CD8-positive, alpha-beta memory T cell (primary cell): ENCODE measurements at regions of chr1 and their contacts with region 1.

Region 1: GRCh38 chr1:147492200-147492599 is 49.1 kb upstream of the BCL9 start:
- DNase-seq: no peak
- H3K4me3 ChIP-seq: no peak overlapping the region
- H3K4me3 Mint-ChIP-seq: no peak overlapping the region
- H3K27ac ChIP-seq: no peak overlapping the region
- H3K27ac Mint-ChIP-seq: no peak overlapping the region
- H3K4me1 ChIP-seq: peaks cover 4% of the 10 kb centered on the region
- H3K4me1 Mint-ChIP-seq: peaks cover 0 to 3% (median 0%) of the 10 kb centered on the region in 3 donors
- H3K27me3 ChIP-seq: no peaks in the 10 kb centered on the region
- H3K27me3 Mint-ChIP-seq: peaks cover 5% of the 10 kb centered on the region in 2 donors

Region 2: GRCh38 chr1:147417028-147417427 is 75.2 kb before region 1 on chr1:
- CTCF ChIA-PET with region 1: no interaction called
- POLR2A ChIA-PET with region 1: no interaction called
- DNase-seq: no peak
- H3K4me3 ChIP-seq: no peak overlapping the region
- H3K4me3 Mint-ChIP-seq: no peak overlapping the region
- H3K27ac ChIP-seq: no peak overlapping the region
- H3K27ac Mint-ChIP-seq: no peak overlapping the region
- H3K4me1 ChIP-seq: no peaks in the 10 kb centered on the region
- H3K4me1 Mint-ChIP-seq: no peaks in the 10 kb centered on the region
- H3K27me3 ChIP-seq: no peaks in the 10 kb centered on the region
- H3K27me3 Mint-ChIP-seq: peaks cover 20 to 68% of the 10 kb centered on the region in 2 donors

Region 3: DNA sequence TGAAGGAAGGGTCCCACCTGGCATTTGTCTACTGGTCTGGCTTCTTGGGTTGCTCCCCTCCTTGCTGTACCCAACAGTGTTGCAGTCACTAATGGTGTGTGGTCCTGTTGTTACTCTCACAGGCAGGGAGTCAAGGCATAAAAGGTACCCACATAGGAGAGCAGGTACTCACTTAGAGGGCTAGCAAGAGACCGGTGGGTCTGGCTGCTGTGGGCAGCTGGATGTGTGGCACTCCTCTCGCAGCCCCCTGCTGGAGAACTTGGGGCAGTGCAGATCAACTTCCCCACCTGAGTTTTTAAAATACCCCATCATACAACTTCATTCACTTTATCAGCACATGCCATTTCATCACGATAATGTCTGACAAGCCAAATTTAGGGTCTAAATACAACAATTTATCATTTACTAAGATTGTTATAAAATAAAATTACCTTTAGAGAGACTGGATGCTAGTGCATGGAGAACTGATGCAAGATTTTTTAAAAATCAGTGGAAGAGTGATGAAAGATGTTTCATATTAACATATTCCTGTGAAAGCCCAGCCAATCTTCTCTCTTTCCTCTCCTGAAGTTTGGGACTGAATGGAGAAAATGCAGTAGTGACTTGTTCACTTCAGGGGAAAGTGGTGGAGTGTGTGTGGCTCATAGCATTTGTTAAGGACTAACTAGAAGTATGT is 135.4 kb after region 1 on chr1:
- CTCF ChIA-PET with region 1: interaction called, 19 read pairs
- POLR2A ChIA-PET with region 1: no interaction called
- DNase-seq: peak; percentile 35 to 69 (median 40)
- H3K4me3 ChIP-seq: no peak overlapping the region
- H3K4me3 Mint-ChIP-seq: peak overlapping the region in 2 of 7 donors; percentile 27 to 51
- H3K27ac ChIP-seq: no peak overlapping the region
- H3K27ac Mint-ChIP-seq: peak overlapping the region in 4 of 8 donors; percentile 22 to 58 (median 42)
- H3K4me1 ChIP-seq: peaks cover 10% of the 10 kb centered on the region
- H3K4me1 Mint-ChIP-seq: peaks cover 25 to 49% (median 27%) of the 10 kb centered on the region in 3 donors
- H3K27me3 ChIP-seq: no peaks in the 10 kb centered on the region
- H3K27me3 Mint-ChIP-seq: no peaks in the 10 kb centered on the region